A549 (cell line): ENCODE measurements at regions of chr16 and their contacts with region 1.

Region 1: DNA sequence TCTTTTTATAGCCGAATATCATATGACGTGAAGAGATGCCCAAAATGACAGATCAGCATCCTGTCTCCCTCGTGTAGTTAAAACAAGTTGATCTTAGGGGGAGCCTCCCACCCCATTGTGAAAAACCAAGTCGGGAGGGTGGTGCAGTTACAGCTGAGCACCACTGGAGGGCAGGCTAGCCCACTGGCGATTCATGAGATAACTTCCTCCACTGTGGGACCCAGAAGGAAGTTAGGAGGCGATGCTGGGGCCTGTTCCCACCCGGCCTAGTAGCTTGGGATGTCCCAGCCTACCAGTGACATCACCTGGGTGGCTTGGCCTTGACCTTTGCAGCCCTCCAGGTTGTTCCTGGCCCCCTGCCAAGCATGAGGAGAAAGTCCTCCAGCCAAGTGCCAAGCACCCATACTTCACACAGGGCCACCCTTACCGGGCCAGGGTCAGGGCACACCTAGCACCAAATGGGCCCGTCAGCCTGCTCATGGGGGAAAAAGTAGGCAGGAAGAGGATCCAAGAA is 8.1 kb upstream of the CPNE2 start:
- DNase-seq: peak; percentile 81 to 93
- ATAC-seq: peak; percentile 67 to 87
- H3K4me3 ChIP-seq: no peak overlapping the region
- H3K27ac ChIP-seq: peak overlapping the region in 1 of 2 experiments; percentile 56; a peak in 3 of 6 replicates
- H3K4me1 ChIP-seq: no peaks in the 10 kb centered on the region
- CTCF ChIP-seq: peak; percentile 90
- EP300 ChIP-seq: no peak
- POLR2A ChIP-seq: no peak
- RAD21 ChIP-seq: peak; percentile 86 to 90

Region 2: DNA sequence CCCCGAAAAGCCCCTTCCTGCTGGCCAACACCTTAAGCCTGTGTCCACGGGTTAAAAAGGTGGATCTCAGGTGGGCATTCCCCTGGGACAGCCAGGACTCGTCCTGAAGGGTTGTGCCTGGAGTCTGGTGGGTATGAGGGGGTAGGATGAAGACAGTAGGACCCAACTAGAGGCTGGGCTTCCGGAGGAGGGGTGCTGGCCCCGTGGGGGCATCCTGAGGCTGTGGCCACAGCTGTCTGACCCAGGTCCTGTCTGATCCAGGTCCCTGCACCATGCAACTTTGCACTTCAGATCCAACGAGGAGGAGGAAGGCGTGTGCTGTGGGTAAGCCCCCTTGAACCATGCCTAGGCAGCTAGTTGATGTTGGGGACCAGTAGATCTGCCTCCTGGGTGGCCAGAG is 29.5 kb before region 1 on chr16:
- CTCF ChIA-PET with region 1: interaction called, 16 read pairs
- POLR2A ChIA-PET with region 1: no interaction called
- DNase-seq: no peak
- ATAC-seq: no peak
- H3K4me3 ChIP-seq: no peak overlapping the region
- H3K27ac ChIP-seq: no peak overlapping the region
- H3K4me1 ChIP-seq: no peaks in the 10 kb centered on the region
- CTCF ChIP-seq: no peak
- EP300 ChIP-seq: no peak
- POLR2A ChIP-seq: no peak
- RAD21 ChIP-seq: no peak

Region 3: DNA sequence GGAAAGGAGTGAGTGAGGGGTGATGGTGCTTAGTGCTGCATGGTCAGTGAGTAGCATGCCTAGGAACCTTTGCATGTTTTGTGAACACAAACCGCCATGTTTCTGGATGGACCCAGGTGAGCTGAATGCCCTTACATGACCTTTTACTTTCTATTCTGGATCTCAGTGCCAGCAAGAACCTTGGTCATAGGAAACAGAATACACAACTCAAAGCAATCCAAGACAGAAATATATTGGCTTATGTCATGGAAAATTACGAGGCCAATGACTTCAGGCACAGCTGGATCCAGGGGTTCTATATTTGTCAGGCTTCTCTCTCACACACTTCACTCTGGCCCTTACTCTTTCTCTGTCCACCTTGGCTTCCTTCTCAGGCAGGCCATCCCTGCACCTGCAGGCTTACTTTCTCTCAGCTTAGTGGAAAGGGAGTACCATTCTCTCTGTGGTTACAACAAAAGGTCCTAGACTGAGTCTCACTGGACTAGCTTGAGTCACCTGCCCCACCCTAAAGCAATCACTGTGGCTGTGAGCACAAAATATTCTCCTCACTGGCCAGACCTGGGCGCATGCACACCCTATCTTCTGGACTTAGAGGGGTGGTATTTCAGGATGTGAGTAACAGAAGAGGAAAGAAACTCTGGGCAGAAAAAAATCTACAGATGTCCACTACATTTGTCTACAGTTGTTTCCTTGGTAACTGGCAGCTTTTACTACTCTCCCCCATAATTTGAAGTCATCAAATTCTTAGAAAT is 12.3 kb before region 1 on chr16:
- CTCF ChIA-PET with region 1: interaction called, 31 read pairs
- POLR2A ChIA-PET with region 1: no interaction called
- DNase-seq: peak in 1 of 2 experiments; percentile 44
- ATAC-seq: peak; percentile 72
- H3K4me3 ChIP-seq: no peak overlapping the region
- H3K27ac ChIP-seq: no peak overlapping the region
- H3K4me1 ChIP-seq: peaks cover 18% of the 10 kb centered on the region
- CTCF ChIP-seq: no peak
- EP300 ChIP-seq: no peak
- POLR2A ChIP-seq: no peak
- RAD21 ChIP-seq: no peak

Region 4: DNA sequence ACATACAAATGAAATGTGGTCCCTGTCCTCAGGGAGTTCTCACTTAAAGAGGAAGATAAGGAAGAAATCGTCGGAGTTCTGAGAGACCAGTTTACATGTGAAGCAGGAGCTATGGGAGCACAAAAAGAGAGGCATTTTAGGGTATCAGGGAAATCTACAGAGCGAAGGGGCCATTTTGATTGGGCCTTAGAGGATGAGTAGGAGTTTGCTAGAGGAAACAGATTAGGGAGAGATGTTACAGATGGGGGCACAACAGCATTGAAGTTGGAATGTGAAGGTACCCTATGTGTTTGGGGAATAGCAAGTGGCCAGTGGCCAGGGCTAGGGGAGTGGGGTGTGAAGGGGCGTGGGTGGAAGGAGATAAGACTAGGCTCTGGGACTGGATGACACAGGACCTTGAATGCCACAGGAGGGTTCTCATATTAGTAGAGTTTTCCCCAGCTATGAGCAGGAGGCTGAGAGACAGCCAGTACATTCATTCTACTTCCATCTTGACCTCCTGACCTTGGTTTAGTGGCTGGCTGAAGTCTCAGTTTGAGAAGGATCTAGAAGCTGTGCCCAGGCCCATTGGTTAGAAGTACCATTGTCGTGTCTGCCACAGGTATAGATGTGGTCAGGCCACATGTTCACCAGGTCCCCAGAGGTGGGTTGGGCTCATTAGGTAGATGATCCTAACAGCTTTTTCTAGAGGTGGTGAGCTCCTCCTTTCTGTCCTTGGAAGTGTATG is 42.9 kb after region 1 on chr16:
- CTCF ChIA-PET with region 1: interaction called, 15 read pairs
- POLR2A ChIA-PET with region 1: no interaction called
- DNase-seq: no peak
- ATAC-seq: no peak
- H3K4me3 ChIP-seq: no peak overlapping the region
- H3K27ac ChIP-seq: no peak overlapping the region
- H3K4me1 ChIP-seq: no peaks in the 10 kb centered on the region
- CTCF ChIP-seq: no peak
- EP300 ChIP-seq: no peak
- POLR2A ChIP-seq: no peak
- RAD21 ChIP-seq: no peak